PC-9 (cell line): ENCODE measurements at regions of chr1 and their contacts with region 1.

Region 1: DNA sequence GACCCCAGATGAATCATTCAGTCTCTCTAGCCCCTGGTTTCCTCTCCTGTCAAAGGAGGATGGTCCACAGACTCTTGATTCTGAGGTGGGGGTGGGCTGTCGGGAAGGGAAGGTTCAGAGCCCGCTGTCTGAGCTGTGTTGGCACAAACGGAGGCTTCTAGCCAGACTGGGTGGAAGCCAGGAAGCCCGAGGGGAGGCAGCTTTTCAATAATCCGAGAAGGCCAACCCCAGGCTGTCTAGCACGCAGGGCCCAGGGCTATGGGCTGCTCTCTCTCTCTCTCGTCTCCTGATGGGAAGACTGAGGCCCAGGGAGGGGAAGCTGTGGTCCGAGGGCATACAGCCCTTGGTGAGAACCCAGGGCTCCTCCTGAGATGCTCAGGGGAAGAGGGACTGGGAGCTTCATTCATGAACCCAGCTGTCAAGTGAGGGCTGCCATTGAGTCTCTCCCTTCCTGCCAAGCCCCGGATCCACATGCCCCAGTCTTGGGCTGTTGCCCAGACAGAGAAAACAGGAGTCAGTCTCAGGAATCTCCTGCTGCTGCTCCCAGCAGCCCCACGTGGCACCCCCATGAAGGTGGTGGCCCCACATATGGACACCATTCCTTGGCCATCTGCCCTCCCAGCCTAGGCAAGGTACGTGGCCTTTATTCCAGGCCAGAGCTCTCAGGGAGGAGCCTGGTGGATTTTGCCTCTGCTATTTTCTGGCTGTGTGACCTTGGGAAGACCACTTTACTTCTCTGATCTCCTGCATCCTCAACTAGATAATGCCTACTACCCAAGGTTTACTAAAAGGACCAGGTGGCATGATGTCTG is 44.4 kb downstream of the RAP1GAP start:
- DNase-seq: no peak
- H3K4me3 ChIP-seq: no peak overlapping the region
- H3K27ac ChIP-seq: 0 out of 2 replicates have a peak overlapping the region, but pooled peaks have one; percentile 96
- H3K4me1 ChIP-seq: peaks cover 57% of the 10 kb centered on the region
- H3K27me3 ChIP-seq: no peaks in the 10 kb centered on the region
- CTCF ChIP-seq: no peak

Region 2: GRCh38 chr1:21384620-21385019 is 240.2 kb before region 1 on chr1:
- CTCF ChIA-PET with region 1: no interaction called
- POLR2A ChIA-PET with region 1: no interaction called
- intact Hi-C with region 1: no loop called
- DNase-seq: peak in 1 of 2 experiments; percentile 50
- H3K4me3 ChIP-seq: no peak overlapping the region
- H3K27ac ChIP-seq: no peak overlapping the region
- H3K4me1 ChIP-seq: peaks cover 7% of the 10 kb centered on the region
- H3K27me3 ChIP-seq: no peaks in the 10 kb centered on the region
- CTCF ChIP-seq: no peak

Region 3: GRCh38 chr1:21594935-21595897 is 29.6 kb before region 1 on chr1:
- CTCF ChIA-PET with region 1: no interaction called
- POLR2A ChIA-PET with region 1: interaction called, 7 read pairs
- intact Hi-C with region 1: loop called (anchors 5 kb)
- DNase-seq: peak in 1 of 2 experiments; percentile 64
- H3K4me3 ChIP-seq: no peak overlapping the region
- H3K27ac ChIP-seq: no peak overlapping the region
- H3K4me1 ChIP-seq: peaks cover 11% of the 10 kb centered on the region; the same call in 1 of the 2 replicates
- H3K27me3 ChIP-seq: no peaks in the 10 kb centered on the region
- CTCF ChIP-seq: peak; percentile 79

Region 4: DNA sequence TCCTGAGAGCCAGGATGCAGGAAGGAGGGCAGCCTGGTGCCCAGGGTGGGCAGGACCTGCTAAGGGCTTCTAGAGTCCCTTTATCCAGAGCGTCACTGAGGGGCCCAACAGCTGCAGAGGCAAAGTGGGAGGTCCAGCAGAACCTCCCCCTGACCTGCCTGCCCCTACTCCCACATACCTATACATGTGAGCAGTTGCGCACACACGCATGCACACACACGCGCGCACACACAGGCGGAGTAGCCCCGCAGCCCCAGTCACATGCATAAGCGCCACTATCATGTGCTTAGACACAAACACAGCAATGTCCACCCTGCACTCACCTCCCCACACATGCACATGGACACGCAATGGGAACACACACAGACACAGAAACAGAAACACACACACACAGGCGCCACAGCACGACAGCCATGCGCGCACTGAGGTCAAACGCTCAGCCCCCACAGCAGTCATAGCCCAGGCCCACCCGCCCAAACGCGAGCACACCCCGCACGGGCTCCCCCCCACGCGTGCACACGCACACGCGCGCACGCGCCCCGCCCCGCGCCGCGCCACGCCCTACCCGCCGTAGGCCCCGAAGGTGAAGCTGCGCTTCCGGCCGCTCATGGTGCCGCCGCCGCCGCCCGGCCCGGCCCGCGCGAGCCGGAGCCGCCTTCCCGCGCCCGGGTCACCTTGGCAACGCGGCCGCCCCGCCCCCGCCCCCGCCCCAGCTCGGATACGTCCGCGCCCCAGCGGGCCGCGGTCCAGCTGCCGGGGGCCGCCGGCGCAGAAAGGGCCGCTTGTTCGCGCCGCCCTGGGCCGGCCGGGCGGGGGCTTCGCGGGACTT is 26.6 kb after region 1 on chr1:
- CTCF ChIA-PET with region 1: interaction called, 10 read pairs
- POLR2A ChIA-PET with region 1: no interaction called
- intact Hi-C with region 1: loop called (anchors 2 kb)
- DNase-seq: peak in 1 of 2 experiments; percentile 54
- H3K4me3 ChIP-seq: peak overlapping the region; percentile 54; the same call in 1 of the 2 replicates
- H3K27ac ChIP-seq: no peak overlapping the region
- H3K4me1 ChIP-seq: peaks cover 31% of the 10 kb centered on the region
- H3K27me3 ChIP-seq: no peaks in the 10 kb centered on the region
- CTCF ChIP-seq: no peak

Region 5: GRCh38 chr1:21663258-21663950 is 38.6 kb after region 1 on chr1:
- CTCF ChIA-PET with region 1: no interaction called
- POLR2A ChIA-PET with region 1: no interaction called
- intact Hi-C with region 1: no loop called
- DNase-seq: no peak
- H3K4me3 ChIP-seq: no peak overlapping the region
- H3K27ac ChIP-seq: no peak overlapping the region
- H3K4me1 ChIP-seq: no peaks in the 10 kb centered on the region
- H3K27me3 ChIP-seq: no peaks in the 10 kb centered on the region
- CTCF ChIP-seq: no peak

Region 6: GRCh38 chr1:21764615-21765423 is 140.0 kb after region 1 on chr1:
- CTCF ChIA-PET with region 1: no interaction called
- POLR2A ChIA-PET with region 1: interaction called, 19 read pairs
- intact Hi-C with region 1: no loop called
- DNase-seq: peak; percentile 88 to 96
- H3K4me3 ChIP-seq: no peak overlapping the region
- H3K27ac ChIP-seq: peak overlapping the region; percentile 60
- H3K4me1 ChIP-seq: peaks cover 26% of the 10 kb centered on the region
- H3K27me3 ChIP-seq: no peaks in the 10 kb centered on the region
- CTCF ChIP-seq: no peak

Region 7: DNA sequence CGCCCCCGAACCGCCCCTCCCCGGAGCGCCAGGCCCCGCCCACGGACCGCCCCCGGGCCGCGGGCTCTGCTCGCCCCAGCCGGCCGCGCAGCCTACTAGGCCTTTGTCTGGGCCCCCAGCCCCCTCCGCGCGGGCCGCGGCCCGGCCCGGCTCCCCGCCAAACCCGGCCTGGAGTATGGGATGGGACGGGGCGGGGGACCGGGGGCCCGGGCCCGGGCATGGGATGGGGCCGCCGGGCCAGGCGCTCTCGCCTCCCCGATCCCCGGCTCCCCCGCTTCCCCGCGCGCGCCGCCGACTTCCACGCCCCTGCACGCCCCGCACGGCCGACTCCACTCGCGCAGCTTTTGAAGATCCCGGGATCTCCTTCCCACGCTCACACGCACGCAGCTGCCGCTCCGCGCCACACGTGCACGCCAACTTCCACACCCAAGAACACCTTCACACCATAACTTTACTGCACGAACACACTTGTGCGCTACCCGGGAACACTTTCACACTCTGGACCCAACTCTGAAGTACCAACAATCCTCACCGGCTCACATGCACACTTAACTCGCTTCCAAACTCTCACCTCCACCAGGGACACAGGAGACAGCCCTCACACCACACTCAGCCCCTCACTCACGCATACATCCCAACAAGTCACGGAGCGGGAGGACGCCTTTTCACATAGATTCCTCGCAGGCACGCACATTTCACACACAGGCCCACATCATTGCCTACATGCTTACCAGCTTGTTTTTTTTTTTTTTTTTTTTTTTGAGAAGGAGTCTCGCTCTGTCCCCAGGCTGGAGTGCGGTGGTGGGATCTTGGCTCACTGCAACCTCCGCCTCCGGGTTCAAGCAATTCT is 312.8 kb after region 1 on chr1:
- CTCF ChIA-PET with region 1: no interaction called
- POLR2A ChIA-PET with region 1: no interaction called
- intact Hi-C with region 1: no loop called
- DNase-seq: peak in 1 of 2 experiments; percentile 74
- H3K4me3 ChIP-seq: peak overlapping the region; percentile 46; the same call in 1 of the 2 replicates
- H3K27ac ChIP-seq: no peak overlapping the region
- H3K4me1 ChIP-seq: peaks cover 44% of the 10 kb centered on the region
- H3K27me3 ChIP-seq: no peaks in the 10 kb centered on the region
- CTCF ChIP-seq: no peak